Activated T-helper 1 cell treated with anti-CD3 and anti-CD28 coated beads, Interleukin-12 subunit alpha, Interleukin-12 subunit beta, Interleukin-2, Interleukin-4 antibody, amounts not matched to agents 30 ng/mL and 10 ng/mL and 1 ng/mL, durations not matched to agents 14 hours and 24 hours and 36 hours (primary cell): ENCODE measurements at regions of chr12 and their contacts with region 1.

Region 1: DNA sequence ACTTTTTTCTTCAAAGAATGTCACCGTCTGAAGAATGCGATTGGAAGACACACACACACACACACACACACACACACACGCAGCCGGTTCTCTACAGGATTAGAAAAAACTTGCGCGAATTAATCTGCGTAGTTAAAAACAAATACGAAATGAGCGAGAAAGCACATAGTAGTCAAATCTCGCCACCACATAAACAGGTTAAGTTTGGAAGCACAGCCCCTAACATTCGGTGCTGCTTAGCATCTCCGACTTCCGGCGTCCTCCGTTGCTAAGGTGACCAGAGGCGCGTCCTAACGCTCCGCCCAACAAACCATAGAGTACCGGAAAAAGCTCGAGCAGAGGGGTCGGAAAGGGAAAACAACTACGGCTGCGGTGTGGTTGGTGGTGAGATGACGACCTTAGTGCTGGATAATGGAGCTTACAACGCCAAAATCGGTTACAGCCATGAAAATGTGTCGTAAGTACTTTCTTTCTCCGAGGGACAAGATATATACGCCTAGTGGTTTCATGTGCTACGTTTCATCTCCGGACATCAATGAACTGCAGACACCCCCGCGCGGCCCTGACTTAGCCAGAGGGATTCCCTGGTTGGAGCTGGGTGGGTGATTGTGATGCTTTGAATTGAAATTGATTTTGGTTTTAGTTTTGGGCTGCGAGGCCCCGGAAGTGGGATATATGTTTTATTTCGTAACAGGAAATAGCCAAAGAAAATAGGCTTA is at the start of gene ACTR6:
- DNase-seq: peak; percentile 94
- H3K4me3 Mint-ChIP-seq: peak within 1 kb of the TSS; percentile 100
- H3K27ac Mint-ChIP-seq: peak within 1 kb of the TSS; percentile 100
- H3K4me1 Mint-ChIP-seq: peaks cover 39% of the 10 kb centered on the region
- H3K27me3 Mint-ChIP-seq: no peaks in the 10 kb centered on the region
- total RNA-seq, gene ACTR6: 29.8 and 35.4 TPM in 2 replicates

Region 2: GRCh38 chr12:98516184-98516873 is 1684.3 kb before region 1 on chr12:
- intact Hi-C with region 1: loop called (anchors 5 kb)
- DNase-seq: peak; percentile 83
- H3K4me3 Mint-ChIP-seq: peak overlapping the region; percentile 98
- H3K27ac Mint-ChIP-seq: peak overlapping the region; percentile 100
- H3K4me1 Mint-ChIP-seq: peaks cover 30% of the 10 kb centered on the region
- H3K27me3 Mint-ChIP-seq: no peaks in the 10 kb centered on the region

Region 3: GRCh38 chr12:100058482-100059029 is 142.1 kb before region 1 on chr12:
- intact Hi-C with region 1: loop called (anchors 10 kb)
- DNase-seq: no peak
- H3K4me3 Mint-ChIP-seq: no peak overlapping the region
- H3K27ac Mint-ChIP-seq: no peak overlapping the region
- H3K4me1 Mint-ChIP-seq: no peaks in the 10 kb centered on the region
- H3K27me3 Mint-ChIP-seq: no peaks in the 10 kb centered on the region

Region 4: GRCh38 chr12:100163416-100164152 is 37.0 kb before region 1 on chr12:
- intact Hi-C with region 1: loop called (anchors 2 kb)
- DNase-seq: peak; percentile 64
- H3K4me3 Mint-ChIP-seq: peak overlapping the region; percentile 51
- H3K27ac Mint-ChIP-seq: no peak overlapping the region
- H3K4me1 Mint-ChIP-seq: peaks cover 17% of the 10 kb centered on the region
- H3K27me3 Mint-ChIP-seq: no peaks in the 10 kb centered on the region

Region 5: DNA sequence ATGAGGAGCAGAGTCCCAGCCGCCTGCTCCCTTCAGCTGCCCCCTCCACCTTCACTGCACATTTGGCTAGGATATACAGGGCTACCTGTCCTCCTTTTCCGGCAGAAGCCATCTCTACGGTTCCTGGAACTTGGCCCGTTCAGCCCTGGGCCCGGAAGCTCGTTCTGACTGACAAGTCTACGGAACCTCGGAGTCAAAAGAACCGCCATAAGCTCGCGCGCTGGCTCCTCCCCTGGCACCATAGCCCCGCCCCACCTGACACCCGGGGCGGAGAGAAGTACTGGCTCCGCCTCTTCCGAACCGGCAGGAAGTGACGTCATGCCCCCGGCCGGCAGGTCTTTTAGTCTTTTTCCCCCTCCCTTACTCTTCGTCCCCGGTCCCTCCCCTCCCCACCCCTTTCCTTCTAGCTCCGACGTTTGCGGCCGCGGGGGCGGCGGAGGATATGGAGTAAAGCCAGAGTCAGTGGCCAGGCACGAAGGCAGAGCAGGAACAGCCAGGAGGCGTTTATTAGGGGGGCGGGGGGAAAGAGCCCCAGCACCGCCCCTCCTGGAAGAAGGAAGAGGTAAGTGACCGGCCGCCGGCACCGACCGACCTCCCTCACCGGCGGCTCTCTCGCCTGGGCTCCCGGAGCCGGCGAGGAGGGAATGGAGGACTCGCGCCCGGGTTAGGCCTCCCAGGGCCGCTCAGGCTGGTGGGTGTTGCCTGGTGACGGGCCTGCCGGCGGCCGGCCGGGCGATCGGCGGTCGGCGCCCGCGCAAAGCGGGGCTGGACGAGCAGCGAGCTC is 66.4 kb after region 1 on chr12 and contains the starts of genes DEPDC4 and SCYL2:
- intact Hi-C with region 1: loop called (anchors 1 kb)
- DNase-seq: peak; percentile 88
- H3K4me3 Mint-ChIP-seq: peak within 1 kb of the TSS; percentile 99
- H3K27ac Mint-ChIP-seq: peak within 1 kb of the TSS; percentile 99
- H3K4me1 Mint-ChIP-seq: peaks cover 36% of the 10 kb centered on the region
- H3K27me3 Mint-ChIP-seq: no peaks in the 10 kb centered on the region
- total RNA-seq, gene DEPDC4: 1.1 and 2.1 TPM in 2 replicates
- total RNA-seq, gene SCYL2: 33.0 and 38.9 TPM in 2 replicates

Region 6: GRCh38 chr12:101564912-101565311 is 1364.3 kb after region 1 on chr12:
- intact Hi-C with region 1: no loop called
- DNase-seq: no peak
- H3K4me3 Mint-ChIP-seq: no peak overlapping the region
- H3K27ac Mint-ChIP-seq: no peak overlapping the region
- H3K4me1 Mint-ChIP-seq: no peaks in the 10 kb centered on the region
- H3K27me3 Mint-ChIP-seq: no peaks in the 10 kb centered on the region